B cell (primary cell): ENCODE measurements at regions of chr14 and their contacts with region 1.

Region 1: DNA sequence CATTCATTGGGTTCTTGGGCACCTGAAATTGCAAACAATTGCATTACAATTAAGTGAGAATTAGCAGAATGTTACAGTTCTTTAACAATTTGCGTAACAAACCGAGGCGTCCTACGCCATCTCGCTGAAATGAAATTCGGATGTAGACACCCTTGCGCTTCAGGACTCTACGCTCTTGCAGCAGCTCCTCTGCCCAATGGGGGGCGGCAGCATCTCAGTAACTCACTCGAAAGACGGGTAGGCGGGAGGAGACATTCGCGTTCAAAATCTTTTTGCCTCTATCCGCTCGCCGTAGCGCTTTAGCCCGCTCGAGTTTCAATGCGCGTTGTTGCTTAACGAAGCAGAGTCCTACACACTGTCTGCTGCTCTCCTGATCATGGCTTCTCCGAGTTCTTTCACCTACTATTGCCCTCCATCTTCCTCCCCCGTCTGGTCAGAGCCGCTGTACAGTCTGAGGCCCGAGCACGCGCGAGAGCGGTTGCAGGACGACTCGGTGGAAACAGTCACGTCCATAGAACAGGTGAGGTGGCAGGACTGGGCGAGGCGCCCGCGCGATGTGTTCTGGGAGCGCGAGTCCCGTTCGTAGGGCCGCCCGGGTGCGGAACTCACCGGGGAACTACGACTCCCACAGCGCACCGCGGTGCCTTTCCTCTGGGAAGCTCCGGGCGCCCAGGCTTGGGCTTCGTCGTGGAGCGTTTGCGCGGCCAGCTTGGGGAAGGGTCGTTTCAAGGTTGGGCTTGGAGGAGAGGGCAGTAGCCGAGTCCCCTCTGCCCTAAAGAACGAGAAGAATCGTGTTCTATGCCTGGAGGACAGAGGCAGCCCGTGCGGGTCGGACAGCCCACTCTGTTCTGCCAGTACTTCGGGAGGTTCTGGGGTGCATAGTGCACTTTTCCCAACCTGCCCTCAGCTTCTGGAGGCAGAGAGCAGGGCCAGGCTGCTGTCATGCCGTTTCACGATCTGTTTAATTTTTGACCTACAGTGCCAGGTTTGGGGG is at the start of gene FNTB:
- DNase-seq: peak; percentile 98
- ATAC-seq: peak; percentile 90
- H3K4me3 ChIP-seq: peak within 1 kb of the TSS; percentile 63 to 92 (median 84)
- H3K4me3 Mint-ChIP-seq: peak within 1 kb of the TSS; percentile 100
- H3K27ac ChIP-seq: peak within 1 kb of the TSS; percentile 65 to 70
- H3K27ac Mint-ChIP-seq: peak within 1 kb of the TSS; percentile 98
- H3K4me1 ChIP-seq: peaks cover 25% of the 10 kb centered on the region in 2 donors
- H3K4me1 Mint-ChIP-seq: peaks cover 41% of the 10 kb centered on the region
- H3K27me3 ChIP-seq: peaks cover 0 to 6% (median 3%) of the 10 kb centered on the region in 4 experiments
- H3K27me3 Mint-ChIP-seq: peaks cover 18% of the 10 kb centered on the region
- CTCF ChIP-seq: peak; percentile 79
- total RNA-seq, gene FNTB: 7.7 and 10.2 TPM in 2 replicates

Region 2: DNA sequence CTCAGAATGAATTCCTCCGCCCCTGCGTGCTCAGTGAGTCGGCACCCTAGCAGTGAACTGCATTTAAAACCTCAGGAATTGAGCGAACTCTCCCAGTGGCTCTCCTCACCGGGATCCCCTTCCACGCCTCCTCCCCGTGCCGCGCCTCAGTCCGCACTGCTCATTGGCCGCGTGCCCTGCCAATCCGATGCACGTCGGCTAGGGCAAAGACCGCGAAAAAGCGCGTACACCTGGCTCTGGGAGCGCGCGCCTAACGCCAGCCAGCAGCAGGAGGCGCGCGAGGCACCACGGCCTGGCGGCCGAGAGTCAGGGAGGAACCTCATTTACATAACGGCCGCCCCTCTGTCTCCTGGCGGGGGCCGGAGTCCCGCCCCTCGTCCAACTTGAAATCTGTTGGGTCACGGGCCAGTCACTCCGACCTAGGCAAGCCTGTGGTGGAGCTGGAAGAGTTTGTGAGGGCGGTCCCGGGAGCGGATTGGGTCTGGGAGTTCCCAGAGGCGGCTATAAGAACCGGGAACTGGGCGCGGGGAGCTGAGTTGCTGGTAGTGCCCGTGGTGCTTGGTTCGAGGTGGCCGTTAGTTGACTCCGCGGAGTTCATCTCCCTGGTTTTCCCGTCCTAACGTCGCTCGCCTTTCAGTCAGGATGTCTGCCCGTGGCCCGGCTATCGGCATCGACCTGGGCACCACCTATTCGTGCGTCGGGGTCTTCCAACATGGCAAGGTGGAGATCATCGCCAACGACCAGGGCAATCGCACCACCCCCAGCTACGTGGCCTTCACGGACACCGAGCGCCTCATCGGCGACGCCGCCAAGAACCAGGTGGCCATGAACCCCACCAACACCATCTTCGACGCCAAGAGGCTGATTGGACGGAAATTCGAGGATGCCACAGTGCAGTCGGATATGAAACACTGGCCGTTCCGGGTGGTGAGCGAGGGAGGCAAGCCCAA is 446.4 kb before region 1 on chr14 and contains the start of gene HSPA2:
- CTCF ChIA-PET with region 1: no interaction called
- POLR2A ChIA-PET with region 1: no interaction called
- intact Hi-C with region 1: loop called (anchors 2 kb)
- DNase-seq: peak; percentile 98
- ATAC-seq: peak; percentile 90
- H3K4me3 ChIP-seq: peak within 1 kb of the TSS; percentile 74 to 98 (median 85)
- H3K4me3 Mint-ChIP-seq: peak within 1 kb of the TSS; percentile 100
- H3K27ac ChIP-seq: peak within 1 kb of the TSS; percentile 60 to 67
- H3K27ac Mint-ChIP-seq: peak within 1 kb of the TSS; percentile 97
- H3K4me1 ChIP-seq: peaks cover 26 to 32% of the 10 kb centered on the region in 2 donors
- H3K4me1 Mint-ChIP-seq: peaks cover 31% of the 10 kb centered on the region
- H3K27me3 ChIP-seq: peaks cover 0 to 19% (median 5%) of the 10 kb centered on the region in 4 experiments
- H3K27me3 Mint-ChIP-seq: peaks cover 5% of the 10 kb centered on the region
- CTCF ChIP-seq: peak; percentile 78
- total RNA-seq, gene HSPA2: 14.9 and 19.6 TPM in 2 replicates

Region 3: DNA sequence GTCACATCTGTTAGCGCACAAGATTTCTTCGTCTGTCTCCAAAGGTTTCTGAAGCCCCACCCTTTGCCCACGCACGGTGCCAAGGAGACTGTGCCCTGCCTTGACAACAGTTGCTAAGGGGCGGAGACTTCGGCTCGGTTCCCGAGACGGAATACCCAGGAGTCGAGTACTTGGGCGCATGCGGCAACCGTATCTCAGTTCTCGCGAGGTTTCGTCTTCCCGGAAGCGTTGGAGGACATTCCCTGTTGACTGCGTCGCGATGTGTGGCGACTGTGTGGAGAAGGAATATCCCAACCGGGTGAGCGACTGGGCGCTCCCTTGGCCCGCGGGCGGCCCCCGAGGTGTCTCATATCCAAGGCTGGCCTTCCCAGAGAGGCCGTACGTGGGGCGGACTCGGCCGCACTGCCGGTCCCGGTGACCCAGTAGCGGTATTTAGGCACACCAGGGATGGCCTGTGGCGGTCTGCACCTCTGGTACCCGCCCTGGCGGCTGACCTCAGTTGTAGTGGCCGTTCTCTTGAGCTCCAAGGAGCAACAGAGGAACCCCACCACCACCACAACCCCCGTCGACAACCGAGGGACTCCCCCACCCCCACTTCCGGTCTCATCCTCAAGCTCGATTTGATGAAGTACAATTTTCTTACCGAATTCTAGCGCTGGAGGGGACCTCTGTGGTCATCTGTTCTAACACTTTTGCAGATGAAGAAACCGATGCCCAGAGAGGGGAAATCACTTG is 72.5 kb before region 1 on chr14 and contains the start of gene CHURC1:
- CTCF ChIA-PET with region 1: interaction called, 3 read pairs
- POLR2A ChIA-PET with region 1: no interaction called
- intact Hi-C with region 1: loop called (anchors 1 kb)
- DNase-seq: peak; percentile 98
- ATAC-seq: peak; percentile 97
- H3K4me3 ChIP-seq: peak within 1 kb of the TSS; percentile 88 to 100 (median 96)
- H3K4me3 Mint-ChIP-seq: peak within 1 kb of the TSS; percentile 85
- H3K27ac ChIP-seq: peak within 1 kb of the TSS; percentile 98 to 99
- H3K27ac Mint-ChIP-seq: peak within 1 kb of the TSS; percentile 96
- H3K4me1 ChIP-seq: peaks cover 17 to 24% of the 10 kb centered on the region in 2 donors
- H3K4me1 Mint-ChIP-seq: peaks cover 40% of the 10 kb centered on the region
- H3K27me3 ChIP-seq: peaks cover 0 to 4% (median 0%) of the 10 kb centered on the region in 4 experiments
- H3K27me3 Mint-ChIP-seq: peaks cover 13% of the 10 kb centered on the region
- CTCF ChIP-seq: no peak
- total RNA-seq, gene CHURC1: 67.7 and 77.1 TPM in 2 replicates

Region 4: GRCh38 chr14:65102441-65103149 is 115.7 kb after region 1 on chr14 and contains the start of gene MAX:
- CTCF ChIA-PET with region 1: interaction called, 3 read pairs
- POLR2A ChIA-PET with region 1: interaction called, 3 read pairs
- intact Hi-C with region 1: loop called (anchors 1 kb)
- DNase-seq: peak; percentile 98
- ATAC-seq: peak; percentile 85
- H3K4me3 ChIP-seq: peak within 1 kb of the TSS; percentile 62 to 97 (median 93)
- H3K4me3 Mint-ChIP-seq: peak within 1 kb of the TSS; percentile 91
- H3K27ac ChIP-seq: peak within 1 kb of the TSS; percentile 95 to 97
- H3K27ac Mint-ChIP-seq: peak within 1 kb of the TSS; percentile 97
- H3K4me1 ChIP-seq: peaks cover 23 to 30% of the 10 kb centered on the region in 2 donors
- H3K4me1 Mint-ChIP-seq: peaks cover 38% of the 10 kb centered on the region
- H3K27me3 ChIP-seq: no peaks in the 10 kb centered on the region
- H3K27me3 Mint-ChIP-seq: no peaks in the 10 kb centered on the region
- CTCF ChIP-seq: no peak
- total RNA-seq, gene MAX: 127 and 130 TPM in 2 replicates

Region 5: DNA sequence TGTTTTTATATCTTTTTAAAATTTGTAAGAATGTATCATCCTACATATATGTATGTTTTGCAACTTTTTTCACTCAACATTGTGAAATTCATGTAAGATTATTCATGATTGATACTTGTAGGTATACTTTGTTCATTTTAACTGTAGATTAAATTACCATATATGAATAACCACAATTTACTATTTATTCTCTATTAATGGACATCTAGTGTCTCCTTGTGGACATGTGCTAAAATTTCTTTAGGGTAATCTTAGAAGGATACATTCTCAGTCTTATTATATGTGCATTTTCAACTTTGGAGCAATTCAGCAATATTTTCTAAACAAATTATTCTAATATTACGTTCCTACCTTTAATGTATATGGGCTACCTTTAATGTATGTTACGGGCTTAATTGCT is 618.1 kb after region 1 on chr14:
- CTCF ChIA-PET with region 1: no interaction called
- POLR2A ChIA-PET with region 1: no interaction called
- intact Hi-C with region 1: loop called (anchors 10 kb)
- DNase-seq: peak; percentile 22
- ATAC-seq: no peak
- H3K4me3 ChIP-seq: peak overlapping the region in 1 of 5 experiments; percentile 21
- H3K4me3 Mint-ChIP-seq: no peak overlapping the region
- H3K27ac ChIP-seq: peak overlapping the region in 1 of 2 donors; percentile 61
- H3K27ac Mint-ChIP-seq: no peak overlapping the region
- H3K4me1 ChIP-seq: peaks cover 11 to 18% of the 10 kb centered on the region in 2 donors
- H3K4me1 Mint-ChIP-seq: peaks cover 12% of the 10 kb centered on the region
- H3K27me3 ChIP-seq: no peaks in the 10 kb centered on the region
- H3K27me3 Mint-ChIP-seq: no peaks in the 10 kb centered on the region
- CTCF ChIP-seq: peak; percentile 70

Region 6: GRCh38 chr14:65958664-65959562 is 972.0 kb after region 1 on chr14:
- CTCF ChIA-PET with region 1: interaction called, 14 read pairs
- POLR2A ChIA-PET with region 1: no interaction called
- intact Hi-C with region 1: no loop called
- DNase-seq: peak; percentile 60
- ATAC-seq: peak; percentile 41
- H3K4me3 ChIP-seq: no peak overlapping the region
- H3K4me3 Mint-ChIP-seq: no peak overlapping the region
- H3K27ac ChIP-seq: no peak overlapping the region
- H3K27ac Mint-ChIP-seq: no peak overlapping the region
- H3K4me1 ChIP-seq: no peaks in the 10 kb centered on the region
- H3K4me1 Mint-ChIP-seq: no peaks in the 10 kb centered on the region
- H3K27me3 ChIP-seq: peaks cover 0 to 15% (median 7%) of the 10 kb centered on the region in 4 experiments
- H3K27me3 Mint-ChIP-seq: peaks cover 30% of the 10 kb centered on the region
- CTCF ChIP-seq: peak; percentile 74